Posterior cingulate gyrus (tissue), 11 donors: ENCODE measurements at regions of chr17 and their contacts with region 1.

Region 1: GRCh38 chr17:2303204-2304188 is at the starts of genes SMG6 and SRR:
- DNase-seq: peak; percentile 84 to 98 (median 91)

Region 2: DNA sequence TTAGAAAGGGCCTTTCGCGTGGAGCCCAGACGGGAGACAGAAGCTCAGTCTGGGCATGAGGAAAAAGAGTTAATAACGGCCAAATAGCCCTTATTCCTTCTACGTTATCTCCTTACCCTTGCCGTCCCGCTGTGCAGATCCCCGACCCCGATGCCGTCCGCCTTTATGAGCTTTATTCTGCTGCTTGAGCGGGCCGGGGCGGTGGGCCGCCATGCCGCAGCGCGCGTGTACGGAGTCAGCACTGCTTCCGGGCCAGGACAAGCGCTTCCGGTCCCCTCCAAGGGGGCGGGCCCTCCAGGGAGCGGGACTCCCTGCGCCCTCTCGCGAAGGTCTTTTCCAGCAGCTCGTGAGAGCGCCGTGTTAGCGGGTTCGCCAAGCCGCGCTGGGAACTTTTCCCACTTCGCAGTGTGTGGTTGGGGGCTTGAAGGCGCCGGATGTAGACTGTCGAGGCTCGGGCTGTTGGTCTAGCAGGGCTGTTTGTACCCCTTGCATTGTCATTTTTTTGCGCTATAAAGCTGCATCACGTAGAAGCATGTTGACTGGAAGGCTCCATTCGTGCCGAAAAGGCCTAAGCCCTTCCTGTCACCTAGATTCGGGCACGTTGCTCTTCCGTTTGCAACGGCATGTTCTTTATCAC is 32.8 kb after region 1 on chr17 and contains the start of gene TSR1:
- intact Hi-C with region 1: loop called (anchors 2 kb)
- DNase-seq: peak; percentile 90 to 99 (median 94)